Calu3 (cell line): ENCODE measurements at regions of chr5 and their contacts with region 1.

Region 1: GRCh38 chr5:54243473-54244080 is 66.8 kb downstream of the ARL15 start:
- DNase-seq: peak; percentile 45
- H3K4me3 Mint-ChIP-seq: no peak overlapping the region
- H3K27ac Mint-ChIP-seq: no peak overlapping the region
- H3K4me1 Mint-ChIP-seq: no peaks in the 10 kb centered on the region
- H3K27me3 Mint-ChIP-seq: no peaks in the 10 kb centered on the region
- CTCF ChIP-seq: peak; percentile 57

Region 2: DNA sequence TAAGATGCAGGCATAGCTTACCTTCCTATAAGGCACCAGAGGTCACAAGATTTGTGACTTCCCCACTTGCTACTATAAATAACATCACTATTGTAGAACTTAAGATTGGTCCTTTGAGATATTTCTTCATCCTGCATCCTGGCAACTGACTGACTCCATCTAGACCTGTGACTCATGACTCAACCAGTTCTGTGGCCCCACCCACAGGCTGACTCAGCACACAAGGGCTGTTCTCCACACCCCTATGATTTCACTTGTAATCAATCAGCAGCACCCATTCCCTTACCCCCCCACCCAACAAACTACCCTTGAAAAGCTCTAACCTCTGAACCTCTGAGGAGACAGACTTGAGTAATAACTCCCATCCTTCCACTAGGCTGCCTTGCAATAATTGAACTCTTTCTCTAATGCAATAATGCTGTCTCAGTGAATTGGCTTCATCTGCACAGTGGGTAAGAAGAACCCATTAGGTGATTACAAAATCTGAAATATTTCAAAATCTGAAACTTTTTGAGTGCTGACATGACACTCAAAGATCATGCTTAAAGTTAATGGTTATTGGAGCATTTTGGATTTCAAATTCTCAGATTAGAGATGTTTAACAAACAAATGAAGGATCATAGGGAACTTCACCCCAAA is 229.9 kb before region 1 on chr5:
- CTCF ChIA-PET with region 1: no interaction called
- intact Hi-C with region 1: no loop called
- DNase-seq: peak; percentile 56
- H3K4me3 Mint-ChIP-seq: no peak overlapping the region
- H3K27ac Mint-ChIP-seq: no peak overlapping the region
- H3K4me1 Mint-ChIP-seq: no peaks in the 10 kb centered on the region
- H3K27me3 Mint-ChIP-seq: no peaks in the 10 kb centered on the region
- CTCF ChIP-seq: no peak

Region 3: GRCh38 chr5:54194318-54194717 is 49.3 kb before region 1 on chr5:
- CTCF ChIA-PET with region 1: no interaction called
- intact Hi-C with region 1: no loop called
- DNase-seq: no peak
- H3K4me3 Mint-ChIP-seq: no peak overlapping the region
- H3K27ac Mint-ChIP-seq: no peak overlapping the region
- H3K4me1 Mint-ChIP-seq: no peaks in the 10 kb centered on the region
- H3K27me3 Mint-ChIP-seq: no peaks in the 10 kb centered on the region
- CTCF ChIP-seq: no peak

Region 4: DNA sequence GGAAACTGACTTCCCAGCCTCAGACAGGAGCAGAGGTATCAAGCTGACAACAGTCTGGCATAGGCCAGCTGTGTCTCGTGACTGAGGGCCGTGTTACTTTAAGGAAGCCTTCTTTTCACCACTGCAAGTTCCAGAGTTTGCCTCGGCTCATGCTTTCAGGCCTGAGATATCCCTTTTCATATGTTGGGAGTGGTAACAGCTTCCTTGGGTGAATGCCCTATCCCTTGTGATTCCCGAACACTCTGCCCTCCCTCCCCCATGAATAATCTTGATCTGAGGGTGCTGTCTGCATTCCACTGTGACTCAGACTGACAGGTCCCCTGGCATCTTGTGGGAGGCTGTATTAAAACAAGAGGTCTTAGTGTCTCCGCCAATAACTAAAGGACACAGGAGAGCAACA is 116.5 kb after region 1 on chr5:
- CTCF ChIA-PET with region 1: no interaction called
- intact Hi-C with region 1: no loop called
- DNase-seq: peak; percentile 7
- H3K4me3 Mint-ChIP-seq: no peak overlapping the region
- H3K27ac Mint-ChIP-seq: no peak overlapping the region
- H3K4me1 Mint-ChIP-seq: peaks cover 11% of the 10 kb centered on the region
- H3K27me3 Mint-ChIP-seq: peaks cover 13% of the 10 kb centered on the region
- CTCF ChIP-seq: no peak

Region 5: DNA sequence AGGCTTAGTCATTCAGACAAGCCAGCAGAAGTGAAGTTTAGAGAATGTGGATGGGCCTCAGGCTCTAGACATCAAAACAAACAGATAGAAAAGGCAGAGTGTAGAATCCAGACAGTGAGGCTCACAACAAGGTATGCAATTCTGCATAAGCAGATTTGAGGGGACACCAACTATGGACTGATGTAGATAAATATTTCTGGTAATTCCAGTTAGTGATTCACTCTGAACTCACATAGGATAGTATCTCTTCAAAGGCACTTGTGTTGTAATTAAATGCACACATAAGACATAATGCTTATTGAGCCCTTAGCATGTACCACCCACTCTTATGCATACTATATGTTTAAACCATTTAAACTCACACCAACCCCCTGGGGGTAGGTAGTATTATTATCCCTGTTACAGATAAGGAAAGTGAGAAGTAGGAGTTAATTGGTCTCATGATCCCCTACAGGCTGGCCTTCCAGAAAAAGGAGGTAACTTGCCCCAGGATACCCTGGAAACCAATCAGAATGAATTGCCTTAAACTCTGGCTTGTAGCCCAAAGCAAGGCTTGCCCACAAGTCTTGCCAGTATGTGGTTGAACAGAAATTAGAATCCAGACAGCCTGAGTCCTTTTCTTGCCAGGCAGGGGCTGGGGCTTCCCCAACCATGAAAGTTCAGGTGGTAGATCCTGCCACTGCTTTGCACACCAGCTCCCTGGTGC is 172.5 kb after region 1 on chr5:
- CTCF ChIA-PET with region 1: interaction called, 16 read pairs
- intact Hi-C with region 1: loop called (anchors 1 kb)
- DNase-seq: no peak
- H3K4me3 Mint-ChIP-seq: no peak overlapping the region
- H3K27ac Mint-ChIP-seq: no peak overlapping the region
- H3K4me1 Mint-ChIP-seq: no peaks in the 10 kb centered on the region
- H3K27me3 Mint-ChIP-seq: peaks cover 42% of the 10 kb centered on the region
- CTCF ChIP-seq: no peak

Region 6: GRCh38 chr5:54492178-54492577 is 248.6 kb after region 1 on chr5:
- CTCF ChIA-PET with region 1: interaction called, 15 read pairs
- intact Hi-C with region 1: no loop called
- DNase-seq: no peak
- H3K4me3 Mint-ChIP-seq: no peak overlapping the region
- H3K27ac Mint-ChIP-seq: no peak overlapping the region
- H3K4me1 Mint-ChIP-seq: no peaks in the 10 kb centered on the region
- H3K27me3 Mint-ChIP-seq: peaks cover 47% of the 10 kb centered on the region
- CTCF ChIP-seq: no peak

Region 7: DNA sequence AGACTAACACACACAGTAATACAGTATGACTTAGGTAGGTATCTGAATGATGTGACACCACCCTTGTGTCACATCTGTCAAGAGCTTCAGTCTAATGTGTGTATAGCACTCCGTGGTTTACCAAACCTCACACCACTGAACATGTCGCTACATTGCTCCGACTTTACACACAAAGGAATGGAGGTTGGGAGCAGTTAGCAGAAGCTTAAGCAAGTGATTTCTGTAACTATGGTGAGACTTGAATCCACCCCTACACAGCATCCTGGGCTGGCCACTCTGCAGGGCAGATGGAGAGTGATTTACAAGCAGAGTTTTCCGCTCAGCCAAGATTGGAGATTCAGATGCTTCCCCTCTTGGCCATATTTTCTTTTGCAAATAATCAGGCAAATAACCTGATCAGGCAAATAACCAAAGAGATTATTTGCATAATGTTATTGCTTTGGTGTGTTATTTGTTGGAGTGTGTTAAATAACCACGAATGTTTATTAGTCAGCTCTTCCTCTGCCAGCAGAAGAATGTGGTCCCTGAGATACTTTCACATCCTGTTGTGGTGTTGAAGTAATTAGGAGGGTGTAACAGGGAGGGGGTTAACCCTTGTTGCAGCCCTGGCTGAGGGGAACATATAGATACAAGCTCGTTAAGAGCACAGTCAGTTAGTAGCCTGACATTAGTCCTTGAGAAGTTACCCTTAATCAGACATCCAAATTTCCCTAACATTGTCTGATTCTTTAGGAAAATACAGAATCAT is 366.8 kb after region 1 on chr5:
- CTCF ChIA-PET with region 1: no interaction called
- intact Hi-C with region 1: no loop called
- DNase-seq: no peak
- H3K4me3 Mint-ChIP-seq: no peak overlapping the region
- H3K27ac Mint-ChIP-seq: no peak overlapping the region
- H3K4me1 Mint-ChIP-seq: peaks cover 8% of the 10 kb centered on the region
- H3K27me3 Mint-ChIP-seq: no peaks in the 10 kb centered on the region
- CTCF ChIP-seq: no peak

Region 8: DNA sequence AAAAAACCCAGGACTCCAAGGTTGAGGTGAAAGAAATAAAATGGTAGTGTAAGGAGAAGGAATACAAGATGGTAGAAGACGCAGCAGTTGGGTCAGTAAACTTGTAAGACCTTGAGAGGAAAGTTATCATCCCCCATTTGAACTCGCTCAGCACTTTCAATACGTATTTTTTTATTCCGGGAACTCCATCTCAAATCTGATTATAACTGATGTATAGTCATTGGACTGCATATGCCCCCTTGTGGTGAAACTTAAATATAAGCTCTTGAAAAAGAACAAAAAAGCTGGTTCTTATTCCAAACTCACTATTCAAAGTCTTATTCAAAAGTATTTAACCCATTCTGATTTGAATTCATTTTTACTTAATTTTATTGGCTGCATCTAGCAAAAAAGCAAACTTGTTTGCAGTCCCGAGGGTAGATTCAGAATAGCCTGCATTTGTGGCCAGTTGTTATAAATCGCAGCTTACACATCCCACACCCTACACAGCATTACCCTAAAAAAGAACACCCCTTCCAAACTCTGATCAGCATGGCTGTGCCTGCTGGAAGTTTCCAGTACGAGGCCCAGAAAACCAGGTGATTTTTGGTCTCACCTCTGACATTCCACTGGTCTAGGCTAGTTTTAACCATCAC is 623.9 kb after region 1 on chr5:
- CTCF ChIA-PET with region 1: interaction called, 5 read pairs
- intact Hi-C with region 1: loop called (anchors 10 kb)
- DNase-seq: no peak
- H3K4me3 Mint-ChIP-seq: no peak overlapping the region
- H3K27ac Mint-ChIP-seq: no peak overlapping the region
- H3K4me1 Mint-ChIP-seq: peaks cover 2% of the 10 kb centered on the region
- H3K27me3 Mint-ChIP-seq: peaks cover 46% of the 10 kb centered on the region
- CTCF ChIP-seq: peak; percentile 41